ENCODE measurements at regions of chr12 and their contacts with region 1.

Region 1: GRCh38 chr12:113232840-113233585 is 11.7 kb downstream of the TPCN1 start:
- DNase-seq: peak; percentile 81
- ATAC-seq: peak; percentile 95
- H3K4me3 Mint-ChIP-seq: peak overlapping the region; percentile 73
- H3K27ac Mint-ChIP-seq: peak overlapping the region; percentile 94
- H3K4me1 Mint-ChIP-seq: peaks cover 53% of the 10 kb centered on the region
- H3K27me3 Mint-ChIP-seq: no peaks in the 10 kb centered on the region

Region 2: DNA sequence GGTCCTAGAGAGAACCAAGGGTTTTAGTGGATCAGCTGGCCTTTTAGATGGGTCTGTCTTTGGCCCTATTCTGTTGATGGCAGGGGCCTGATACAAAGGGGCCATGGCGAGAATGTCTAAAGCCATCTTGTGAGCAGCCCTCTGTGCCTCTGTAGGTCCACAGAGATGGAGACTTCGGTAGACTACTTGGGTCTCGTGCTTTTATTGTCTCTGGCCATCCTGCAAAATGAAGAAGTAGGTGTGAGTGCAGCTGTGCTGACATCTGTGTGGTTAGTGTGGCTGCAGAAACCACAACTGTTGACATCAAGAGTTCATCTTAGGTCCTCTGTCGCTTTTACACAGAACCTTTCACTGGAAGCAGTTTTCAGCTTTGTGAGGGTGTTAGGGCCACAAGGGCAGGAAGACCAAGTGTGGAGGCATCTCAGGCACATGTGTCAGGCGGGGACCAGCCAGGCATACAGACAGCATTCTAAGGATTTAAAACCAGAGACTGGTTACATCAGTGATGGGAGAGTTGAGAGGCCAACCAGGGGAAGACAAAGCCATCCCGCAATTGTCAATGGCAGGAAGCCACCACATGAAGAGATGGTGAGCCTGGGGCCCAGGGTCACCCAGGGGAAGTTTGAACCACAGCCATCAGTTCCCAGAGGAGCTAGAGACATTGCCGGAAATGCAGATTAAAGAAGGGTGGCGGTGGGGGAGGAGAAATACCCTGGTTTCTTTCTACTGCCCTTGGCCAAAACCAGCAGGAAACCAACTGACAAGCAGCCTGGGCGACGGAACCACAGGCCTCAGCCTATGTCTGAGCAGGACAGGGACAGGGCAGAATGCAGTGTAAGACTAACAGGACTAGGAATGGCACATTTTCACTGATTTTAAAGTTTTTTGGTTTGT is 24.7 kb before region 1 on chr12:
- CTCF ChIA-PET with region 1: interaction called, 13 read pairs
- POLR2A ChIA-PET with region 1: interaction called, 4 read pairs
- DNase-seq: peak; percentile 90
- ATAC-seq: peak; percentile 82
- H3K4me3 Mint-ChIP-seq: peak overlapping the region; percentile 56
- H3K27ac Mint-ChIP-seq: peak overlapping the region; percentile 93
- H3K4me1 Mint-ChIP-seq: peaks cover 67% of the 10 kb centered on the region
- H3K27me3 Mint-ChIP-seq: no peaks in the 10 kb centered on the region

Region 3: DNA sequence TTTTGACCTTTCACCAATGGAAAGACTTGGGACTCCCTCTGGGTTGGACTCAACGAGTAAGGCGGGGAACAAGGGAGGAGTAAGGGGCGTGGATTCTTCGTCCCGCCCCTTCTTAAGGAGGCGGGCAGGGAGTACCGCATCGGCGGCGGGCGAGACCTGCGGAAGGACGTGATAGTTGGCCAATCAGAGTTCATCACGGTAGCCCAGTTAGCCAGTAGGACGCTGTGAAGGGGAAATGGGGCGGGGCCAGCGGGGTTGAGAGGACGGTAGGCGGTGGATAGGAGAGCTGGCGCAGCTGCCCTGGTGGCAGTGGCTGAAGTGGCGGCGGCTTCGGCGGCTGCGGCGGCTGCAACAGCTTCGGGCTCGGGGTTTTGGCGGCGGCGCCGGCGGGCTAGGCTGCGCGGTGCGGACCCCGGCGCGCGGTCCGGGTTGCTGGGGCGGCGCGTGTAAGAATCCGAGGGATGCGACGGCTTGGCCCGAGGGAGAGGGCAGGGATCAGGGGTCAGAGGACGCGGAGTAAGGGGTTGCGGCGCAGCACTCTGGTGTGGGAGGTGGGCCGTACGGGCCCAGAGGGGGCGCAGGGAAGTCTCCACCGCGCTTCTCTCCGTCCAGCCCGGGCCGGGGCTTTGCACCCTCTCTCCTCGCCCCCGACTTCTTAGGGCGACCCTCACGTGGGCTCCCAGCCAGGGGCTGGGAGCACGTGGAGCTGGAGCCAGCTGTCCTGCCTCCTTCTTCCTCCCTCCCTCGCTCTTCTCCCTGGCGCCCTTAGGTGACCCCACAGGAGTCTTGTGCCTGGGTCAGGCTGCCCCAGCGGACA is 11.6 kb before region 1 on chr12 and contains the start of gene TPCN1:
- CTCF ChIA-PET with region 1: interaction called, 31 read pairs
- POLR2A ChIA-PET with region 1: interaction called, 6 read pairs
- DNase-seq: peak; percentile 100
- ATAC-seq: peak; percentile 96
- H3K4me3 Mint-ChIP-seq: peak within 1 kb of the TSS; percentile 78
- H3K27ac Mint-ChIP-seq: peak within 1 kb of the TSS; percentile 83
- H3K4me1 Mint-ChIP-seq: peaks cover 40% of the 10 kb centered on the region
- H3K27me3 Mint-ChIP-seq: peaks cover 3% of the 10 kb centered on the region
- total RNA-seq, gene TPCN1: 13.7 to 16.1 TPM

Region 4: GRCh38 chr12:113261847-113262470 is 28.9 kb after region 1 on chr12:
- CTCF ChIA-PET with region 1: interaction called, 13 read pairs
- POLR2A ChIA-PET with region 1: no interaction called
- DNase-seq: peak; percentile 69
- ATAC-seq: peak; percentile 76
- H3K4me3 Mint-ChIP-seq: peak overlapping the region; percentile 44
- H3K27ac Mint-ChIP-seq: peak overlapping the region; percentile 85
- H3K4me1 Mint-ChIP-seq: peaks cover 47% of the 10 kb centered on the region
- H3K27me3 Mint-ChIP-seq: no peaks in the 10 kb centered on the region

Measured in activated CD8-positive, alpha-beta T cell treated with anti-CD3 and anti-CD28 coated beads, Interleukin-2, amount 10 ng/mL, durations not matched to agents 7 days and 5 days (primary cell).